ENCODE measurements at regions of chr2 and their contacts with region 1.

Region 1: DNA sequence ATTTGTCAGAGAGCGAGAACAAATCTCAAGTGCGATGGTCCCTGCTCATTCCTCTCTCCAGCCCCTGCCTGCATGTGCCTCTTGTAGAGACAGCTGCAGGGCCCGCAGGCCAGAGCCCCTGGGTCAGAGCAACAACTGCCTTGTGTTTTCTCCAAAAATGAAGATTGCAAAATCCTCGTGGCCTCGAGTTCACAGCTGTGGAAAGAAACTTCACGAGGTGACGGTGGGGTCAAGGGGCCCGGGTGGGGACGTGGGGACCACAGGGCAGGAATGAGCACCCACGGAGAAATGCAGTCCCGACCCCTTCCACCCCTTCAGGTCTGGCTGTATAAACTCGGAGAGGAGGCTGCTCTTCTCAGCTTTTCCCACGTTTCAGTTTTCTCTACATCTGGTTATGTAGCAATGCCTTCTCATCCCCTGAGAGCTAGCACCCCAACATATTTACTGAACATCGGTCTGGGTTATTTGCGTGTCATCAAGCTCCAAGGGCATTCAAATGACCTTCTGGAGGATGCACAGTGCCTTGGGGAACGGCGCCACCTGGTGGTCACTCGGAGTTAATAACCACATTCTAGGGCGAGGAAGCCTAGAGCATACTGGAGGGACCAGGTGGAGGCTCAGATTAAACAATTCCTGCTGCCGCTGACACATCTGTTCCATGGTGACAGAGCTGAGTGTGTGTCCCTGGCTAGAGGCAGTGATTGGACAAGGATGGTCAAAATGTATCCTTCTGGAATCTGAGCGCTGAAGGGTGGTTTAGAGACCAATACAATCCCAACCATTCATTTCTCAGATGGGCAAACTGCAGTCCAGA is 91.4 kb upstream of the CYRIA start:
- DNase-seq: peak; percentile 73
- H3K4me3 Mint-ChIP-seq: no peak overlapping the region
- H3K27ac Mint-ChIP-seq: no peak overlapping the region
- H3K4me1 Mint-ChIP-seq: no peaks in the 10 kb centered on the region
- H3K27me3 Mint-ChIP-seq: peaks cover 8% of the 10 kb centered on the region

Region 2: GRCh38 chr2:16525265-16525887 is 231.7 kb before region 1 on chr2:
- CTCF ChIA-PET with region 1: interaction called, 13 read pairs
- intact Hi-C with region 1: loop called (anchors 2 kb)
- DNase-seq: peak; percentile 51
- H3K4me3 Mint-ChIP-seq: no peak overlapping the region
- H3K27ac Mint-ChIP-seq: no peak overlapping the region
- H3K4me1 Mint-ChIP-seq: no peaks in the 10 kb centered on the region
- H3K27me3 Mint-ChIP-seq: peaks cover 20% of the 10 kb centered on the region

Region 3: GRCh38 chr2:16553226-16553625 is 203.8 kb before region 1 on chr2:
- CTCF ChIA-PET with region 1: interaction called, 5 read pairs
- intact Hi-C with region 1: loop called (anchors 2 kb)
- DNase-seq: peak; percentile 31
- H3K4me3 Mint-ChIP-seq: no peak overlapping the region
- H3K27ac Mint-ChIP-seq: no peak overlapping the region
- H3K4me1 Mint-ChIP-seq: no peaks in the 10 kb centered on the region
- H3K27me3 Mint-ChIP-seq: peaks cover 3% of the 10 kb centered on the region

Region 4: GRCh38 chr2:16608661-16609643 is 148.1 kb before region 1 on chr2:
- CTCF ChIA-PET with region 1: interaction called, 30 read pairs
- intact Hi-C with region 1: loop called (anchors 1 kb)
- DNase-seq: peak; percentile 93
- H3K4me3 Mint-ChIP-seq: peak overlapping the region; percentile 78
- H3K27ac Mint-ChIP-seq: no peak overlapping the region
- H3K4me1 Mint-ChIP-seq: no peaks in the 10 kb centered on the region
- H3K27me3 Mint-ChIP-seq: peaks cover 9% of the 10 kb centered on the region

Region 5: DNA sequence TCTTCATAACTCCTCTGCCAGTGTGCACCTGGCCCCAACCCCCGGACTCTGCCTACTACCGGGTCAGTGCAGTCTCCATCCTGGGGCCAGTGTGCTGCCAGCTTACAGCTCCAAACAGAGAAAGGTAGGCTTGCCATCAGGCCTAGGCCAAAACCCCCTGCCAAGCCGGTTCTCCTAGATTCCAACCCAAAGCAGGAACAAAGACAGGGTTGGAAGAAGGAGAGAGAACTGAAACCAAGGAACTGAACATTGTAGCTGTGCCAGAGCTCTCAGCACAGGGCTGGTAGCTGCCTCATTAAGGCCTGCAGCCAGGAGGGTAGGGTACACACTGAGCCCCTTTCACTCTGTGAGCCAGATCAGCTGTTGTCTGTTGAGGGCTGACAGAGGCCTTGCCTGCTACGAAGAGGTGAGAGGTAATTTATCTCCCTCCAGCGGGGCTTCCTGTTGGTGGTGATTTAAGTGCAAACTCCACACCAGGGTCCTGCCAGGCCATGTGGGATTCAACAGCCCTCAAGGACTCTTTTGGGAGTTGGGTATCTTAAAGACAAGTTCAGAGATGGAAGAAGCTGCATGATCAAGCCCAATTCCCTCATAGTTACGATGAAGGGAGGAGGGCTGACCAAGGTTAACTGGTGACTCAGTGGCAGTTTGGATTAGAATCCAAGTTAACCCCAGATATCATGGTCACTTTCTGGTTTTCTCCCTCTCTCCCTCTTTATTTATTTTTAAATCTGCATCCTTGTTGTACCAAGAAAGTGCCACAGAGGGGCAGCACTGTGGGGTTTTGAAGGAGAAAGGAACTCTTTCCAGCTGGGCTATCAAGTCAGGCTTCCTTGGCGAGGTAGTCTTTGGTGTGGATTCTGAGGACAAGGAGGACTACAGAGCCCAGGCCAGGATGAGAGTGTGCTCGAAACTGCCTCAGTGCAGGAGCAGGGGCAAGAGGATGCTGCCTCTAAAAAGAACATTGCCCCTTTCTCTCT is 139.5 kb before region 1 on chr2:
- CTCF ChIA-PET with region 1: interaction called, 30 read pairs
- intact Hi-C with region 1: loop called (anchors 1 kb)
- DNase-seq: no peak
- H3K4me3 Mint-ChIP-seq: no peak overlapping the region
- H3K27ac Mint-ChIP-seq: no peak overlapping the region
- H3K4me1 Mint-ChIP-seq: peaks cover 7% of the 10 kb centered on the region
- H3K27me3 Mint-ChIP-seq: peaks cover 20% of the 10 kb centered on the region

Region 6: DNA sequence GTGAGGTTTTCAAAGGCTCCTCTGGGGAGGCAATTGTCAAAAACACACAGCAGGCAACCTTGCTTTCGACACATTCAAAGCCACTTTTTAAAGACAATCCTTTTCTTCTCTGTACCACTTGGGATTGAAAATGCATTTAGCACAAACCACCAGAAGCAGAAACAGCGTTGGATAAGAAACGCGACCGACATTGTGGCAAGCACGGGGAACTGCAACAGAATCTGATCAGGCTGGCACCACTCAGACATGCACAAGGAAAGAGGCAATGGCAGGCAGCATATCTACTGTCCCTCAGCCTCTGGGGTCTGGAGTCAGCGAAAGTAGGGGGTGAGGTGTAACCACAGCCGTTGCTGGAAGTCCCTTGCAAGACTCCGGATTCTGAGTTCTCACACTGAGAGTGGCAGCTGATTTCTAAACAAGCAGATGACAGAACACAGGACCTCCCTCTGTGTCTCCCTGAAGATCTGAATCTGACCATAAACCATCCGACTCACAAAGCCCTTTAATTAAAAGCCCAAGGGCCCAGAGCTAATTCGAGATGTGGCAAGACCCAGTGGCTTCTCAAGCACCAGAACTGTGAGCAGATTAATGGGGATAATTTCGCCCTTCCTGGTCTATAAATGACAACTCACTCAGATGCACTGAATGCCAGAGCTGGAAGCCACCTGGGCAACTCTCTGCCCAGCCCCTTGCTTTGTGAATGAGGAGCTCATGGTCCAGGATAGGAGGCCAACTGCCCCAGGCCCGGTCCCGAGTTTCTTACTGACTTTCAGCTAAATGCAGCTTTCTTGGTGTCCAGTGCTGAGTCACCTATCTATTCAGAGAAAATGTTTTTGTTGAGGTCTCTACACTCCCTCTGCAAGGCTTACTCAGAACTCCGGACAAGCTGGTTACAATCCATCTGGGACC is 121.0 kb before region 1 on chr2:
- CTCF ChIA-PET with region 1: interaction called, 5 read pairs
- intact Hi-C with region 1: loop called (anchors 1 kb)
- DNase-seq: no peak
- H3K4me3 Mint-ChIP-seq: no peak overlapping the region
- H3K27ac Mint-ChIP-seq: no peak overlapping the region
- H3K4me1 Mint-ChIP-seq: peaks cover 22% of the 10 kb centered on the region
- H3K27me3 Mint-ChIP-seq: peaks cover 21% of the 10 kb centered on the region

Region 7: DNA sequence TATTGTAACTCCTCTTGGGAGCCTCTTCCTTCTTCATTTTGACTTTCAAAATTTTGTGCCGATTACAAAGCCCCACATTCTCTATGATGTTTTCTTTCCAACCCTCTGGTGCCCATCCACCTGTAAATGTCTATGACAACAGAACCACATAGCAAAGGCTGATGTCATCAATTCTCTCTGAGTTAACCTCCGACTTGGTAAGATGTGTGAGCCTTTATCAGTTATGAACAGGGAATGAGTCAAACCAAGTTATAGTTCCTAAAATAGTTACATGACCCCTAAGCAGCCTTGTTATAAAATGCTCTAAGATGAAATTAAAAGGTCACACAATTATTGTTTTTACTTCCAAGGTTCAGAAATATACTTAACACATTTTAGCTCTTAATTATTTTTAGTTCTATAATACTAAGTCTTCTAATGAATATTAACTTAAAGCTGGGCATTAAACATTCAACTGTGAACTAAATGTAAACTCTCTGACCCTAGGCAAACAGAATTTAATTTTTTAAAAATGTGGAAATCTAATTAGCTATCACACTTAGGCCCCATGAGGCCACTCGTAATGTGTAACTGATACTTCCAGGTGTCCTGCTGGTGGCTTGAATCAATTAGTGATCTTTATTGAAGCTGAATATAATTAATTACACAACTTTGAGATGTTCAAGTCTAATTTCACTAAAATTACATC is 10.9 kb after region 1 on chr2:
- CTCF ChIA-PET with region 1: interaction called, 11 read pairs
- intact Hi-C with region 1: no loop called
- DNase-seq: no peak
- H3K4me3 Mint-ChIP-seq: no peak overlapping the region
- H3K27ac Mint-ChIP-seq: no peak overlapping the region
- H3K4me1 Mint-ChIP-seq: no peaks in the 10 kb centered on the region
- H3K27me3 Mint-ChIP-seq: peaks cover 25% of the 10 kb centered on the region

Region 8: GRCh38 chr2:16882706-16883105 is 125.7 kb after region 1 on chr2:
- CTCF ChIA-PET with region 1: no interaction called
- intact Hi-C with region 1: no loop called
- DNase-seq: no peak
- H3K4me3 Mint-ChIP-seq: no peak overlapping the region
- H3K27ac Mint-ChIP-seq: no peak overlapping the region
- H3K4me1 Mint-ChIP-seq: no peaks in the 10 kb centered on the region
- H3K27me3 Mint-ChIP-seq: peaks cover 4% of the 10 kb centered on the region

Measured in activated naive CD4-positive, alpha-beta T cell treated with anti-CD3 and anti-CD28 coated beads for 36 hours (primary cell).